ENCODE measurements at regions of chr15 and their contacts with region 1.

Region 1: DNA sequence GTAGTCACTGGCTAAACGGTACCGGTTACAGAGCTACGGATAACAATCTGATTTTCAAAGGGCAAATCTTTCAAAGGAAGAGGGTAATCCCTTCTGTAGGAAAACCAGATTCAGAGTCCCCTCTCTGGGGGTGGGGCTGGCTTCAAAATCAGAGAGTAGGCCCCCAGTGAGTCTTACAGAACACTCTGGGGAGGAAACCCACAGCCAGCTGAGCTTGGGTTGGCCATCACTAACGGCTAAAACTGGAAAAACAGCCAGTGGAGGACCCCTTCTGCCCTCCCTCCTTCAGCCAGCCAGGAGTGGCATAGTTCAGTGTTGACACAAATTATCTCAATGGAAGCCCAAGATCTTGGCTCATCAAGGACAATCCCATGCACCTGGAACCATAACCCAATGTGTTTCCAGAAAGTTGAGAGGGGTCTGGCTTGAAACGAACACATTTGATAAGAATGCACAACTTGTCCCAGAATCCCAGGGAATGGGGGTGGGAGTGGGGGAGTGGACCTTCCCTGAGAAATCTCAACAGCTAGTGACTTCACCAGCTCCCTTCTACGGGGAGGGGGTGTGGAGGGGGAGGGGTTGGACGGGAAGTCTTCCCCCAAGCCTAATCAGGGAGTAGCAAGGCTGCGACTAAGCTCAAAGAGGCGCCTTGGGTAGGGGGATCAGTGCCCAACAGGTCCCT is 1.0 kb downstream of the RASL12 start:
- DNase-seq: no peak
- H3K4me3 ChIP-seq: no peak overlapping the region
- H3K27ac ChIP-seq: no peak overlapping the region
- H3K4me1 ChIP-seq: no peaks in the 10 kb centered on the region
- H3K27me3 ChIP-seq: no peaks in the 10 kb centered on the region; the same call in 1 of the 2 replicates
- CTCF ChIP-seq: no peak

Region 2: GRCh38 chr15:65008983-65009382 is 57.8 kb before region 1 on chr15:
- CTCF ChIA-PET with region 1: no interaction called
- POLR2A ChIA-PET with region 1: interaction called, 17 read pairs
- intact Hi-C with region 1: no loop called
- DNase-seq: no peak
- H3K4me3 ChIP-seq: no peak overlapping the region
- H3K27ac ChIP-seq: no peak overlapping the region
- H3K4me1 ChIP-seq: no peaks in the 10 kb centered on the region
- H3K27me3 ChIP-seq: no peaks in the 10 kb centered on the region
- CTCF ChIP-seq: no peak

Region 3: GRCh38 chr15:65101411-65101890 is 34.7 kb after region 1 on chr15:
- CTCF ChIA-PET with region 1: interaction called, 11 read pairs
- POLR2A ChIA-PET with region 1: no interaction called
- intact Hi-C with region 1: no loop called
- DNase-seq: peak in 1 of 2 experiments; percentile 49
- H3K4me3 ChIP-seq: no peak overlapping the region
- H3K27ac ChIP-seq: no peak overlapping the region
- H3K4me1 ChIP-seq: no peaks in the 10 kb centered on the region
- H3K27me3 ChIP-seq: no peaks in the 10 kb centered on the region
- CTCF ChIP-seq: peak; percentile 77

Region 4: DNA sequence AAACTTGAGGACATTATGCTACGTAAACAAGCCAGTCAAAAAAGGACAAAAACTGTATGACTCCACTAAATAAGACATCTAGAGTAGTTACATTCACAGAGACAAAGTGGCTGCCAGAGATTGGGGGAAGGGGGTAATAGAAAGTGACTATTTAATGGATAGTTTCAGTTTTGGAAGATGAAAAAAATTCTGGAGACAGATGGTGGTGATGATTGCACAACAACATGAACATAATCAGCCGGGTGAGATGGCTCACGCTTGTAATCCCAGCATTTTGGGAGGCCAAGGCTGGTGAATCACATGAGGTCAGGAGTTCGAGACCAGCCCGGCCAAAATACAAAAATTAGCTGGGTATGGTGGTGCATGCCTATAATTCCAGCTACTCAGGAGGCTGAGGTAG is 410.1 kb after region 1 on chr15:
- CTCF ChIA-PET with region 1: no interaction called
- POLR2A ChIA-PET with region 1: no interaction called
- intact Hi-C with region 1: no loop called
- DNase-seq: no peak
- H3K4me3 ChIP-seq: no peak overlapping the region
- H3K27ac ChIP-seq: no peak overlapping the region
- H3K4me1 ChIP-seq: no peaks in the 10 kb centered on the region
- H3K27me3 ChIP-seq: no peaks in the 10 kb centered on the region
- CTCF ChIP-seq: no peak